MCF 10A (cell line): ENCODE measurements at regions of chr11 and their contacts with region 1.

Region 1: GRCh38 chr11:122101625-122102291 is 14.3 kb downstream of the BLID start:
- DNase-seq: peak; percentile 85
- H3K4me3 Mint-ChIP-seq: no peak overlapping the region
- H3K27ac Mint-ChIP-seq: no peak overlapping the region
- H3K4me1 Mint-ChIP-seq: peaks cover 27% of the 10 kb centered on the region
- H3K27me3 Mint-ChIP-seq: no peaks in the 10 kb centered on the region
- CTCF ChIP-seq: peak; percentile 41

Region 2: GRCh38 chr11:121591405-121592033 is 510.2 kb before region 1 on chr11:
- CTCF ChIA-PET with region 1: no interaction called
- POLR2A ChIA-PET with region 1: no interaction called
- intact Hi-C with region 1: loop called (anchors 5 kb)
- DNase-seq: peak; percentile 80
- H3K4me3 Mint-ChIP-seq: no peak overlapping the region
- H3K27ac Mint-ChIP-seq: no peak overlapping the region
- H3K4me1 Mint-ChIP-seq: peaks cover 24% of the 10 kb centered on the region
- H3K27me3 Mint-ChIP-seq: no peaks in the 10 kb centered on the region
- CTCF ChIP-seq: peak; percentile 86

Region 3: DNA sequence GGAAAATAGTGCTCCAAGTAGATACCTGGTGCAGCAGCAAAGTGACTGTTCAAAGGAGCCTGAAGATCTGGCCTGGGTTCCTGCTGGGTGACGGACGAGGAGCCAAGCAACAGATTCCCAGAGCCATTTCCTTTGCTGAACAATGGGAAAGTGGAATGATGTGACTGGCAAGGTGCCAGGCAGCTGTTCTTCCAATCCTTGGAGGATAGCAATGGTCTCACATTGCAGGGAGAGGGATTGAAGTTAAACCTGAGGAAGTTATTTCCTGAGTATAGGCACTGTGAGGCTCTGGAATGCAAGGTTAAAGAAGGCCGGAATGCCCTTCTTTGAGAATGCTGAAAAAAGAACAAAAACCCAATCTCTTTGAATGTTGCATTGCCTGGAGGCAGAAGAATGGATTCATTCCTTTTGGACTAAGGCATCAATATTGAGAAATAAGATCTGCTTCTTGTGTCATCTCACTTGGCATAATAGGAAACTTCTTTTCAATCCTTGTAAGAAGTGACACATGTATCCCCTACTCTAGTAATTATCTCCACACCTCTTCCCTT is 209.6 kb before region 1 on chr11:
- CTCF ChIA-PET with region 1: no interaction called
- POLR2A ChIA-PET with region 1: interaction called, 4 read pairs
- intact Hi-C with region 1: loop called (anchors 5 kb)
- DNase-seq: peak; percentile 88
- H3K4me3 Mint-ChIP-seq: no peak overlapping the region
- H3K27ac Mint-ChIP-seq: peak overlapping the region; percentile 25
- H3K4me1 Mint-ChIP-seq: peaks cover 67% of the 10 kb centered on the region
- H3K27me3 Mint-ChIP-seq: no peaks in the 10 kb centered on the region
- CTCF ChIP-seq: no peak

Region 4: GRCh38 chr11:122115524-122116379 is 14.0 kb after region 1 on chr11 and contains the start of gene BLID:
- CTCF ChIA-PET with region 1: interaction called, 29 read pairs
- POLR2A ChIA-PET with region 1: interaction called, 29 read pairs
- intact Hi-C with region 1: no loop called
- DNase-seq: peak; percentile 34
- H3K4me3 Mint-ChIP-seq: no peak within 1 kb of the TSS
- H3K27ac Mint-ChIP-seq: peak within 1 kb of the TSS; percentile 34
- H3K4me1 Mint-ChIP-seq: peaks cover 13% of the 10 kb centered on the region
- H3K27me3 Mint-ChIP-seq: no peaks in the 10 kb centered on the region
- CTCF ChIP-seq: no peak
- total RNA-seq, gene BLID: 4.1 and 4.5 TPM in 2 replicates

Region 5: GRCh38 chr11:122153746-122154145 is 52.0 kb after region 1 on chr11:
- CTCF ChIA-PET with region 1: interaction called, 32 read pairs
- POLR2A ChIA-PET with region 1: interaction called, 290 read pairs
- intact Hi-C with region 1: loop called (anchors 2 kb)
- DNase-seq: no peak
- H3K4me3 Mint-ChIP-seq: no peak overlapping the region
- H3K27ac Mint-ChIP-seq: peak overlapping the region; percentile 54
- H3K4me1 Mint-ChIP-seq: peaks cover 49% of the 10 kb centered on the region
- H3K27me3 Mint-ChIP-seq: no peaks in the 10 kb centered on the region
- CTCF ChIP-seq: no peak

Region 6: GRCh38 chr11:122179961-122180834 is 78.4 kb after region 1 on chr11:
- CTCF ChIA-PET with region 1: interaction called, 12 read pairs
- POLR2A ChIA-PET with region 1: interaction called, 69 read pairs
- intact Hi-C with region 1: no loop called
- DNase-seq: peak; percentile 95
- H3K4me3 Mint-ChIP-seq: peak overlapping the region; percentile 67
- H3K27ac Mint-ChIP-seq: peak overlapping the region; percentile 90
- H3K4me1 Mint-ChIP-seq: peaks cover 62% of the 10 kb centered on the region
- H3K27me3 Mint-ChIP-seq: no peaks in the 10 kb centered on the region
- CTCF ChIP-seq: no peak

Region 7: DNA sequence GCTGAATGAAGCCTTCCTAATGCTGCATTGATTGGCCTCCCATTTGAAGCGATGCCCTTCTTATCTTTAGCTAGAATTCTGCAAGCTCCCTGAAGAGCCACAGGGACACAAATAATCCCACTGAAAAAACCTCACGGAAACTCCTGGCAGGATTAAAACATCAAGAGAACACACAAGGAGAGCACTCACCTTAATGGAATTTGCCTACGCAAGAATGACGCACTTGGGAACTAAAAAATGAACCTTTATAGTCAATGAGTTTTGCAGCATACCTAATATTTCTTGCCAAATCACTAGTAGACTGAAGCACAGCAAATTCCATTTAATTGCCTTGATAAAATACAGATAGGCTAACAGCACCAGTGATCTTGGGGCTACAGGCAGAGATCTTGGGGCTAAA is 320.9 kb after region 1 on chr11:
- CTCF ChIA-PET with region 1: no interaction called
- POLR2A ChIA-PET with region 1: interaction called, 26 read pairs
- intact Hi-C with region 1: loop called (anchors 2 kb)
- DNase-seq: peak; percentile 95
- H3K4me3 Mint-ChIP-seq: peak overlapping the region; percentile 76
- H3K27ac Mint-ChIP-seq: peak overlapping the region; percentile 97
- H3K4me1 Mint-ChIP-seq: peaks cover 42% of the 10 kb centered on the region
- H3K27me3 Mint-ChIP-seq: no peaks in the 10 kb centered on the region
- CTCF ChIP-seq: no peak